ENCODE measurements at regions of chr9 and their contacts with region 1.

Region 1: GRCh38 chr9:97615439-97616072 is 17.6 kb downstream of the TSTD2 start:
- DNase-seq: no peak
- ATAC-seq: peak; percentile 55

Region 2: GRCh38 chr9:97411789-97412625 is 203.5 kb before region 1 on chr9 and contains the start of gene TDRD7:
- intact Hi-C with region 1: loop called (anchors 2 kb)
- DNase-seq: peak; percentile 94
- ATAC-seq: peak; percentile 96
- total RNA-seq, gene TDRD7: 8.7 TPM

Region 3: GRCh38 chr9:97468658-97469448 is 146.7 kb before region 1 on chr9:
- intact Hi-C with region 1: loop called (anchors 1 kb)
- DNase-seq: peak; percentile 85
- ATAC-seq: peak; percentile 96

Region 4: DNA sequence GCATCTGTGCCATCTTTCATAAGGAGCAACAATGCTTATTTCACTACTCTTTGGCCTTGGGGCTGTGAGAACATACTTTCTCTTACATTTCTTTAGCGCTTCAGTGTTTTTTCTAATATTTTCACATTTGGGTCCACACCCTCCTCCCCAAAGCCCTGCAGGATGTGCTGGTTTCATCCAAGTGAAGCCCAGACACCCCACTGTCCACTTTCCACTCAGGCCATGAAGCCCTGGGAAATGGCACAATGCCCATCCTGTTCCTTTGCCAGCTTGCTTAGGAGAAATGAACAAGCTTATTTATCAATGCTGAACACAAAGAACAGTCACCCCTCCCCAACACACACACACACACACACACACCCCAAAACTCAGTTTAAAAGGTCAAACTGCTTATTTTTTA is 131.4 kb before region 1 on chr9:
- intact Hi-C with region 1: loop called (anchors 5 kb)
- DNase-seq: no peak
- ATAC-seq: no peak